H1 (cell line): ENCODE measurements at regions of chr3 and their contacts with region 1.

Region 1: GRCh38 chr3:42961633-42962032 is 17.5 kb upstream of the GASK1A start:
- DNase-seq: peak in 1 of 2 experiments; percentile 47
- H3K4me3 ChIP-seq: no peak overlapping the region
- H3K27ac ChIP-seq: no peak overlapping the region
- H3K4me1 ChIP-seq: no peaks in the 10 kb centered on the region
- H3K27me3 ChIP-seq: no peaks in the 10 kb centered on the region
- CTCF ChIP-seq: peak in 2 of 3 experiments; percentile 70 to 71; a peak in 3 of 4 replicates
- EP300 ChIP-seq: no peak
- POLR2A ChIP-seq: no peak
- RAD21 ChIP-seq: peak; percentile 85 to 88

Region 2: DNA sequence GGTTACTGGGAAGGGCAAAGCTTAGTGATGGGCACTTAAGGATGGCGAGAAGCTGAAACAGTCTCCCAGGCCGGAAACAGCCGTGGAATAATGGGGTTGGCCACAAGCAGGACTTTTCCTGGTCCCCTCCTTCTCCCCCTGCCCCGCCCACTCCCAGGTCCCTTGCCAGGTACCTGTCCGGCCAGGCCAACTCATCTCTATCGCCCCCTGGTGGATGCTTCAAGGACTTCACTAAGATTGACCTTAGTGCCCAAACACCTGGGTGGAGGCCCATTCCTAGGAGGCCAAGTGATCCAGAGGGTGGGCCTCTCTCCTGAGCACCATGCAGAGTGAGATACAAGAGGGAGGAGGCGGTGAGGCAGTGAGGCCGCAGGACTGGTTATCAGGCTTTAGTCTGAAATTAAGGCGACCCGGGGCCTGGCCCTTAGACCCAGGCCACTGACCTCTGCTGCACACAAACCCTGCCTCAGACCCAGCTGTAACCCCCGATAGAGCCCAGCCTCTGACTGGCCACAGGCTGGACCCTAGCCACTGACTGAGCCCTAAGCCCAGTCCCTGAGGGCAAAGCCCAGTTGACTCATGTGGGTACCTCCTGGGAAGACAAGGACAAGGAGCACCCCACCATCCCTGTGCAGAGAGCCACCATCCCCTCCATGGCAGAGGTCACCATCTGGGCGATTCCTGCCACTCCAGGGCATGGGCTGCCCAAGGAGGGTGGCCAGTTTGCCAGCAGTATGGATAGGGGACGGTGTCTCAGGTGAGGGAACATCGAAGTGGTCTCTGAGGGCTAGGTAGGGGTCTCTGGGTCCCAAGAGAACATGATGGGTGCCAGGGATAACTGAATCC is 421.5 kb before region 1 on chr3:
- CTCF ChIA-PET with region 1: no interaction called
- POLR2A ChIA-PET with region 1: no interaction called
- DNase-seq: peak; percentile 56 to 97
- H3K4me3 ChIP-seq: no peak overlapping the region
- H3K27ac ChIP-seq: no peak overlapping the region
- H3K4me1 ChIP-seq: peaks cover 2 to 6% (median 4%) of the 10 kb centered on the region in 4 experiments
- H3K27me3 ChIP-seq: peaks cover 0 to 2% (median 0%) of the 10 kb centered on the region in 4 experiments; a peak in 1 of 7 replicates
- CTCF ChIP-seq: peak; percentile 75 to 92 (median 90)
- EP300 ChIP-seq: no peak
- POLR2A ChIP-seq: no peak
- RAD21 ChIP-seq: peak; percentile 61 to 82

Region 3: DNA sequence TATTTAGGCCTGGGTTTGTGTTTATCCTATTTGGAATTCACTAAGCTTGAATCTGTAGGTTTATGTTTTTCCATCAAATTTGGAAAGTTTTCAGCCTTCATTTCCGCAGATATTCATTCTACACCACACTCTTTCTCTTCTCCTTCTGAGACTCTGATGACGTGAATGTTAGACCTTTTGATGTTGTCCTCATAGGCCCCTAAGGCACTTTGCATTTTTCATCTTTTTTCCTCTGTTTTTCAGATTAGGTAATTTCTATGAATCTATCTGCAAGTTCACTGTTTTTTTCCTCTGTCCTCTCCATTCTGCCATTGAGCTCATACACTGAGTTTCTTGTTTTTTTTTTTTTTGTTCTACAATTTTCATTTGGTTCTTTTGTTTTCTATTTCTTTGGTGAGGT is 30.7 kb before region 1 on chr3:
- CTCF ChIA-PET with region 1: no interaction called
- POLR2A ChIA-PET with region 1: no interaction called
- DNase-seq: no peak
- H3K4me3 ChIP-seq: no peak overlapping the region
- H3K27ac ChIP-seq: no peak overlapping the region
- H3K4me1 ChIP-seq: no peaks in the 10 kb centered on the region
- H3K27me3 ChIP-seq: no peaks in the 10 kb centered on the region
- CTCF ChIP-seq: no peak
- EP300 ChIP-seq: no peak
- POLR2A ChIP-seq: no peak
- RAD21 ChIP-seq: no peak

Region 4: DNA sequence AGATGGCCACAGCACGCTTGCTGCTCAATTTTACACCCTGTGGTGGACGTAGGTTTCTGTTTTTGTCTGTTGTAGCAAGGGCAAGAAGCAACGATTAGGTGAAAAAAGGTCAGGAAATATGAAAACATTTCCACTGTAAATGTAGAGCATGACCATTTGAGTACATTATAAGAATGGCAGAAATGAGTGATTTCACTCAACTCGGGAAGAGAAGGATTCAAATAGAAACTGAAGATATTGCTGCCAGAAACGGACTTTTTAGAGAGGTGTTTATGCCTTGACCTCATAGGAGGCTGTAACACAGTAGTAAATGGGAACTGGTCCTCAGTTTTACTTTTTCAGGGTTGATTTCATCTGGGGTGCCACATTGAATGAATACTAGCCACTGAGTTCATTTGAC is 15.6 kb before region 1 on chr3:
- CTCF ChIA-PET with region 1: interaction called, 17 read pairs
- POLR2A ChIA-PET with region 1: no interaction called
- DNase-seq: no peak
- H3K4me3 ChIP-seq: no peak overlapping the region
- H3K27ac ChIP-seq: no peak overlapping the region
- H3K4me1 ChIP-seq: no peaks in the 10 kb centered on the region
- H3K27me3 ChIP-seq: no peaks in the 10 kb centered on the region
- CTCF ChIP-seq: no peak
- EP300 ChIP-seq: no peak
- POLR2A ChIP-seq: no peak
- RAD21 ChIP-seq: no peak

Region 5: DNA sequence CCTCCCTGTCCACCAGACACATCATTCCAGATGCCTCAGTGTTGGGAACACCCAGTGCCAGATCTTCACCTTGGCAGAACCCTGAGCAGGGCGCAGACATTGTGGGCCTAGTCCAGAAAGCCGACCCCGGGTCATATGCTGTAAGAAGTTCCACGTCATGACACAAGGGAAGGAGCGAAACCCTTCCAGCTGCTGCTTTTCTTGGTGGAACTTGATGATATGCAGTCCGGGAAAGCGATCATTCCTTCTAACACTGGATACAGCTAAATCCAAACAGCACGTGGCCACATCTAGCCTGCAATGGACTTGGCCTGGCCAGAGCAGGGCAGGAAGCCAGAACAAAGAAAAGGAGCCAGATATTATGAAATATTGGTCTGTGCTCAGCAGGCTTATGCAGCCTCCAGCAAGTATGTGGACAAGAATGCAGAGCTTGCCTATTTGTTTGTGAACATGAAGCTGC is 39.5 kb after region 1 on chr3:
- CTCF ChIA-PET with region 1: interaction called, 65 read pairs
- POLR2A ChIA-PET with region 1: no interaction called
- DNase-seq: no peak
- H3K4me3 ChIP-seq: no peak overlapping the region
- H3K27ac ChIP-seq: no peak overlapping the region
- H3K4me1 ChIP-seq: no peaks in the 10 kb centered on the region; a peak in 1 of 7 replicates
- H3K27me3 ChIP-seq: no peaks in the 10 kb centered on the region
- CTCF ChIP-seq: no peak
- EP300 ChIP-seq: no peak
- POLR2A ChIP-seq: no peak
- RAD21 ChIP-seq: no peak

Region 6: DNA sequence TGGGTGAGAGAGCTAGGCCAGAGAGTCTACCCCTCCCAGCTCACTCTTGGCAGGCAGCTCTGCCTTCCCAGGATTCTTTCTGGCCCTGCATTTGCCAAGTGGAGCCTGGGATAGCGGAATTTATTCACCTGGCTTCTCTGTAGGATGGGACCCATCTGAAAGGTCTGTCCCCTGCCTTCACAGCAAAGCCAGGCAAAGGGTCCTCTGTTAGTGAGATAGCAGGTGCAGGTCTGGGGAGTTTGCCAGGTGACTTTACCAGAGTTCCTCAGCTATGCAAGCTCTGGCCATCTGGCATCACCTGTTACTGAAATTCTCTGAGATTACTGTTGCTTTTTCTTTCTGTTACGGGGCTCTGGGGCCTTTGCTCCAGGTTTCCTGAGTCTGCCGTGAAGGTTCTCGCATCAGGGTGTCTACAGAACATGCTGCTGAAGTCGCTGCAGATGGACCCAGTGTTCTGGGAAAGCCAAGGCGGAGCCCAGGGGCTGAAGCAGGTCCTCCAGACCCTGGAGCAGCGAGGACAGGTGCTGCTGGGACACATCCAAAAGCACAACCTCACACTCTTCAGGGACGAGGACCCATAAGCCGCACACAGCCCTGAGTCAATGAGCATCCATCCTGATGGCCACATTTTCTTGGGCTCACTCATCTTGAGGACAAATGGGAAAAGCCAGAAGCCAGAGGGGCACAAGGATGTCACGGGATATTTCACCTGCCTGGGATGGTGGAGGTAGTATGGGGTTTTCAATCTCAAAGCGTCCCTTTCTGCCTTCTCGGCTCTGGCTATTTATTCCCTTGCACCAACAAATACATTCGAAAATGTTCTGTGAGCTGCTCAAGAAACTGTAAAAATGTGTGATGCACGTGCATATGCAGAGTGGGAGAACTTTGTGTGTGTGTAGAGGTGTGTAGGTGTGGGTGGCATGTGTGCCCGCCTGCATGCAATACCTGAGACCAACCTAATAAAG is 94.5 kb after region 1 on chr3:
- CTCF ChIA-PET with region 1: interaction called, 19 read pairs
- POLR2A ChIA-PET with region 1: no interaction called
- DNase-seq: no peak
- H3K4me3 ChIP-seq: no peak overlapping the region
- H3K27ac ChIP-seq: no peak overlapping the region
- H3K4me1 ChIP-seq: no peaks in the 10 kb centered on the region; a peak in 2 of 7 replicates
- H3K27me3 ChIP-seq: no peaks in the 10 kb centered on the region; a peak in 1 of 7 replicates
- CTCF ChIP-seq: no peak
- EP300 ChIP-seq: no peak
- POLR2A ChIP-seq: no peak
- RAD21 ChIP-seq: no peak

Region 7: DNA sequence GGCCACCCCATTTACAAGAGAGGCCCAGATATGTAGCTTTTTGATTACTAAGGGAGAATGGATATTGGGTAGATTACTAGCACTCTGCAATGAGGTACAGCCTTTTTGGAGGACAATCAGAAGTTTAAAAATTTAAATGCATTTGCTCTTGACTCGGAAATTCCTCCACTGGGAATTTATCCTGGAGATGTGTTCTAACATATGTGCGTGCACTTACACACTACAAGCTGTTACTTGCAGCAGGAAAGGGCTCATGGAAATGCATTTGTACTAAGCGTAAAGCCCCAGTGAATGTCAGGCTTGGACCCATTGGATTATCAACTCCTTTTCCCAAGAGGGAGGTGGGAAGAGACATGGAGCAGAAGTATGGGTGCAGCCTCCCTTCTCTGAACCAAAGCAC is 152.0 kb after region 1 on chr3:
- CTCF ChIA-PET with region 1: interaction called, 32 read pairs
- POLR2A ChIA-PET with region 1: interaction called, 3 read pairs
- DNase-seq: no peak
- H3K4me3 ChIP-seq: no peak overlapping the region
- H3K27ac ChIP-seq: no peak overlapping the region
- H3K4me1 ChIP-seq: peaks cover 0 to 4% (median 0%) of the 10 kb centered on the region in 4 experiments; a peak in 1 of 7 replicates
- H3K27me3 ChIP-seq: no peaks in the 10 kb centered on the region
- CTCF ChIP-seq: no peak
- EP300 ChIP-seq: no peak
- POLR2A ChIP-seq: no peak
- RAD21 ChIP-seq: no peak

Region 8: GRCh38 chr3:43155464-43156121 is 194.0 kb after region 1 on chr3:
- CTCF ChIA-PET with region 1: interaction called, 111 read pairs
- POLR2A ChIA-PET with region 1: no interaction called
- DNase-seq: peak; percentile 23 to 71
- H3K4me3 ChIP-seq: no peak overlapping the region
- H3K27ac ChIP-seq: no peak overlapping the region
- H3K4me1 ChIP-seq: no peaks in the 10 kb centered on the region; a peak in 1 of 7 replicates
- H3K27me3 ChIP-seq: peaks cover 0 to 8% (median 0%) of the 10 kb centered on the region in 4 experiments; a peak in 3 of 7 replicates
- CTCF ChIP-seq: peak; percentile 69 to 80 (median 80)
- EP300 ChIP-seq: no peak
- POLR2A ChIP-seq: no peak
- RAD21 ChIP-seq: peak; percentile 85 to 87